Activated T-helper 2 cell treated with anti-CD3 and anti-CD28 coated beads, Interferon-gamma antibody, Interleukin-2, Interleukin-4, amounts not matched to agents 10 μg/mL and 5 μg/mL and 100 μg/mL, durations not matched to agents 14 hours and 24 hours and 36 hours (primary cell): ENCODE measurements at regions of chr12 and their contacts with region 1.

Region 1: GRCh38 chr12:94326727-94327126 is 132.9 kb downstream of the CEP83 start:
- DNase-seq: no peak
- H3K4me3 Mint-ChIP-seq: no peak overlapping the region
- H3K27ac Mint-ChIP-seq: peak overlapping the region; percentile 44
- H3K4me1 Mint-ChIP-seq: peaks cover 35% of the 10 kb centered on the region
- H3K27me3 Mint-ChIP-seq: no peaks in the 10 kb centered on the region

Region 2: GRCh38 chr12:94362653-94363052 is 35.9 kb after region 1 on chr12:
- intact Hi-C with region 1: loop called (anchors 1 kb)
- DNase-seq: no peak
- H3K4me3 Mint-ChIP-seq: no peak overlapping the region
- H3K27ac Mint-ChIP-seq: no peak overlapping the region
- H3K4me1 Mint-ChIP-seq: peaks cover 3% of the 10 kb centered on the region
- H3K27me3 Mint-ChIP-seq: no peaks in the 10 kb centered on the region

Region 3: DNA sequence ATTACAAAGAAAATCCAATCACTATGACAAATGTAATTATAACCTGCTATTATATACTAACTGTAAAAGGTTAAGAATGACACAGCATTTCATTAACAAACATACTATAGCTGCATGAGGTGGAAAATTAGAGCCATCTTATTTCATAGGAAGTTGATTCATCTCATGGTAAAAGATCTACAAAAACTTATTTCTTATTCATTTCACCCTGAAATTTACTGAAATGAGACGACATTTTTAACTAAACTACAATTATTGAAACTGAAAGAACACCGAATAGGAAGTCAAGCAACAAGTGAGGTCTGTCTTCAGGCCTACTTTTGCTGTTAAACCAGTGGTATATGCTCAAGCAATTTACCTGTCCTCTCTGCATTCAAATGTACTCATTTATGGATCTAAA is 45.7 kb after region 1 on chr12:
- intact Hi-C with region 1: loop called (anchors 1 kb)
- DNase-seq: no peak
- H3K4me3 Mint-ChIP-seq: peak overlapping the region; percentile 13
- H3K27ac Mint-ChIP-seq: peak overlapping the region; percentile 74
- H3K4me1 Mint-ChIP-seq: peaks cover 41% of the 10 kb centered on the region
- H3K27me3 Mint-ChIP-seq: no peaks in the 10 kb centered on the region

Region 4: GRCh38 chr12:94459728-94460615 is 133.2 kb after region 1 on chr12 and contains the start of gene CEP83:
- intact Hi-C with region 1: loop called (anchors 2 kb)
- DNase-seq: peak; percentile 95
- H3K4me3 Mint-ChIP-seq: peak within 1 kb of the TSS; percentile 88
- H3K27ac Mint-ChIP-seq: peak within 1 kb of the TSS; percentile 92
- H3K4me1 Mint-ChIP-seq: peaks cover 27% of the 10 kb centered on the region
- H3K27me3 Mint-ChIP-seq: peaks cover 5% of the 10 kb centered on the region
- total RNA-seq, gene CEP83: 32.4 and 35.9 TPM in 2 replicates